Left colon (tissue), 2 donors: ENCODE measurements at regions of chr17 and their contacts with region 1.

Region 1: DNA sequence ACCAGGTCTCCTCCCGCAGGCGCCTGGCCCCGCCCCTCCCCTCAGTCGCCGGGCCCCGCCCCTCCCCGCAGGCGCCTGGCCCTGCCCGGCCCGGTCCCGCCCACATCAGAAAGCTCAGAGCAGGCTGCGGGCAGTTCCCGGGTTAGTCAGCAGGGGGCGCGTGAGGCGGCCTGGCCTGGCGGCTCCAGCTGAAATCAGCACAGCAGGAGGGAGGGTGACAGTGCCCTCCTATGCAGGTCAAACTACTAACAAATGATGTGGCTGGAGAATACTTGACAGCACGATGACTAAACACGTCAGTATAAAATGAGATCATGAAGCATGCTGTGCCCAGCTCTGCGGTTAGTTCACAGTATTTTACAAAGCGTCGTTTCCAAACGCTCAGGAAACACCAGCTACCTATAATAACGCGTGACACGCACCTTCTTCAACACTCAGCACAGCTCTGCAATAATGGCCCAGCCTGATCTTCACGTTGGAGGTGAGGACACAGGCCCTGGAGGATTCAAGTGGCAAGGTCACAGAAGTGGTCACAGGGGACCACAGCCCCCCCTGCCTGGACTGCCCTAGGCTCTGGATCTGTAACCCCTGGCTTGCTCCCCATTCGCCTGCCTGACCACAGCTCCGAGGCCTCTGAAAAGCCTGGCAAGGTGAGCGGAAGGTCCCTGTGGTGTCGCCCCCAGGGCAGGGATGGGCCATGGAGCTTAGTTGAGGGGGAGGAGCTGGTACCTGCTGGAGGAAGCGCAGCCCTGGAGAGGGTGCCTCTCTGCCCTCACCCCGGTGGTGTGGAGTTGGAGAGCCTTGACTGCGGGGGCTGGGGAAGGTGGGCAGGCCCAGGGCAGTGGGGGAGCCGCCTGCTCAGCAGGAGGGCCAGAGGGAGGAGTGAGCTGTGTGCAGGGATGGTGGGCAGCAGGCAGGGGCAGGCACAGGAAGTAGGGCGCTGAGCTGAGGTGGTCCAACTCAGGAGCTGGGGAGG is 81.2 kb downstream of the KCNJ12 start:
- DNase-seq: peak; percentile 83 to 92
- ATAC-seq: peak; percentile 98

Region 2: GRCh38 chr17:21508211-21508610 is 50.9 kb after region 1 on chr17:
- intact Hi-C with region 1: loop called in 1 of 2 experiments (anchors 10 kb)
- DNase-seq: no peak
- ATAC-seq: no peak